ENCODE measurements at regions of chr1 and their contacts with region 1.

Region 1: DNA sequence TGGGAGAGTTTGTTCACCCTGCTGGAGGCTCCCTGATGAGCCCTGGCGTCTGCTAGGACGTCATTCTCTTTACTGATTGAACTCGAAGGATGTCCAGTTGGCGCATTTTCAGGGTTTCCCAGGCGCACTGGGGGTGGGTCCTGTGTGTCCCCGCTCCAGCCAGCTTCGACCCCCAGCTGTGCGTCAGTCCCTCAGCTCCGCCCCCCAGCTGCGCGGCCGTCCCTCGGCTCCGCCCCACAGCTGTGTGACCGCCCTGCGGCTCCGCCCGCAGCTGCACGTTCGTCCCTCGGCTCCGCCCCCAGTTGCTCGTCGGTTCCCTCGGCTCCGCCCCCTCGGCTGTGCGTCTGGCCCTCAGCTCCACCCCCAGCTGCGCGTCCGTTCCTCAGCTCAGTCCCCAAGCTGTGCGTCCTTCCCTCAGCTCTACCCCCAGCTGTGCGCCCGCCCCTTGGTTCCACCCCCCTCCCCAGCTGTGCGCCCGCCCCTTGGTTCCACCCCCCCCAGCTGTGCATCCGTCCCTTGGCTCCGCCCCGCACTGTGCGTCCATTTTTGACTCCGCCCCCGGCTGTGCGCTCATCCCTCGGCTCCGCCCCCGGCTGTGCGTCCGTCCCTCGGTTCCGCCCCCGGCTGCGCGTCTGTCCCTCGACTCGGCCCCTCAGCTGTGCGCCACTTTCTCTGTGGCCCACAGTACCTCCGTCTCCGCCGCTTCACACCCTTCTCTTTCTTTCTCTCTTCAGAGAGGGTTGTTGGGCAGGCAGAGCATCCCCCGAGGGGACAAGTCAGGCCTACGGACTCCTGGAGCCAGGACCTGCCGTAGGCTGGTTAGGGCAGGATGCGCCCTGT is 61.3 kb downstream of the FAAP20 start:
- DNase-seq: peak; percentile 97 to 98 (median 98)
- H3K4me3 ChIP-seq: peak overlapping the region; percentile 61 to 77
- H3K4me3 Mint-ChIP-seq: peak overlapping the region; percentile 82 to 92 (median 85)
- H3K27ac ChIP-seq: peak overlapping the region; percentile 64
- H3K27ac Mint-ChIP-seq: peak overlapping the region; percentile 81 to 98 (median 97)
- H3K4me1 ChIP-seq: peaks cover 11% of the 10 kb centered on the region
- H3K4me1 Mint-ChIP-seq: peaks cover 10 to 47% (median 28%) of the 10 kb centered on the region in 4 donors
- H3K27me3 ChIP-seq: no peaks in the 10 kb centered on the region
- H3K27me3 Mint-ChIP-seq: no peaks in the 10 kb centered on the region

Region 2: DNA sequence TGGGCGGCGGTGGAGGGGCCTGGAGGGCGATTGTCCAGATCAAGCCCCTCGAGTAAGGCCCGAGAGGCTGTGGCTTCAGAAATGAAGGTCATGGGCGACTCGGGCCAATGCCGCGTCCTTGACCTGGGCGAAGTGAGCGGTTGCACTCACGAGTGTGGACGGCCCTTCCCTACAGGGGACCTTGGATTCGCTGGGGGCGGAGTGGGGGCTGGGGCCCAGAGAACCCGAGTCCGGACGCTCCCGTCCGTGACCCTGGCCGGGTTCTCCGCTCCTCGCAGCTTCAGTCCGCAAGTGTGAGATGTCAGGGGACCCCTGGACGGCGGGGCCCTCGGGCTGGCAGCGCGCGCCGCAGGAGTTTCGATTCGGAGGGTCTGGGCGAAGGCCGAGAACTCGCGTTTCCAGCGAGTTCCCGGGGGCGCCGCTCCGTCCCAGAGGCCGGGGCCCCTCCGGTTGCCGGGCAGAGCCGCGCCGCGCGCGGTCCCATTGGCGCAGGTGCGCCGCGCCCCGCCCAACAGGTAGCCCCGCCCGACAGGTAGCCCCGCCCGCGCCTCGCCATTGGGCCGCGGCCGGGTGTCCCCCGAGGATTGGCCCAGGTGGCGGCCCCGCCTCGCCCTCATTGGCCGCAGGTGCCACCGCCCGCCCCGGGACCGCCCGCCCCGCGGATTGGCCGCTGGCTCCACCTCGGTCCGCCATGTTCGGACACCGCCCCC is 83.4 kb before region 1 on chr1 and contains the start of gene PRKCZ:
- CTCF ChIA-PET with region 1: no interaction called
- POLR2A ChIA-PET with region 1: interaction called, 3 read pairs
- intact Hi-C with region 1: loop called (anchors 1 kb)
- DNase-seq: peak; percentile 92 to 95 (median 93)
- H3K4me3 ChIP-seq: peak within 1 kb of the TSS; percentile 57 to 68
- H3K4me3 Mint-ChIP-seq: peak within 1 kb of the TSS; percentile 73 to 86 (median 84)
- H3K27ac ChIP-seq: peak within 1 kb of the TSS; percentile 66
- H3K27ac Mint-ChIP-seq: peak within 1 kb of the TSS; percentile 4 to 86 (median 48)
- H3K4me1 ChIP-seq: peaks cover 28% of the 10 kb centered on the region
- H3K4me1 Mint-ChIP-seq: peaks cover 8 to 46% (median 17%) of the 10 kb centered on the region in 4 donors
- H3K27me3 ChIP-seq: no peaks in the 10 kb centered on the region
- H3K27me3 Mint-ChIP-seq: peaks cover 0 to 4% of the 10 kb centered on the region in 2 donors
- total RNA-seq, gene PRKCZ: 32.5 to 40.7 TPM

Region 3: GRCh38 chr1:2148691-2149090 is 15.4 kb after region 1 on chr1:
- CTCF ChIA-PET with region 1: interaction called, 27 read pairs
- POLR2A ChIA-PET with region 1: interaction called, 13 read pairs
- intact Hi-C with region 1: loop called (anchors 2 kb)
- DNase-seq: peak; percentile 74 to 89 (median 81)
- H3K4me3 ChIP-seq: peak overlapping the region in 1 of 2 donors; percentile 44
- H3K4me3 Mint-ChIP-seq: no peak overlapping the region
- H3K27ac ChIP-seq: peak overlapping the region; percentile 58
- H3K27ac Mint-ChIP-seq: no peak overlapping the region
- H3K4me1 ChIP-seq: peaks cover 47% of the 10 kb centered on the region
- H3K4me1 Mint-ChIP-seq: peaks cover 6 to 29% (median 13%) of the 10 kb centered on the region in 4 donors
- H3K27me3 ChIP-seq: no peaks in the 10 kb centered on the region
- H3K27me3 Mint-ChIP-seq: no peaks in the 10 kb centered on the region

Region 4: GRCh38 chr1:2642560-2643413 is 509.5 kb after region 1 on chr1:
- CTCF ChIA-PET with region 1: no interaction called
- POLR2A ChIA-PET with region 1: no interaction called
- intact Hi-C with region 1: loop called (anchors 5 kb)
- DNase-seq: peak; percentile 95 to 96 (median 95)
- H3K4me3 ChIP-seq: peak overlapping the region; percentile 69 to 83
- H3K4me3 Mint-ChIP-seq: peak overlapping the region; percentile 85 to 94 (median 88)
- H3K27ac ChIP-seq: peak overlapping the region; percentile 99
- H3K27ac Mint-ChIP-seq: peak overlapping the region; percentile 85 to 99 (median 96)
- H3K4me1 ChIP-seq: peaks cover 16% of the 10 kb centered on the region
- H3K4me1 Mint-ChIP-seq: peaks cover 2 to 21% (median 10%) of the 10 kb centered on the region in 4 donors
- H3K27me3 ChIP-seq: no peaks in the 10 kb centered on the region
- H3K27me3 Mint-ChIP-seq: no peaks in the 10 kb centered on the region